ENCODE measurements at regions of chr17 and their contacts with region 1.

Region 1: GRCh38 chr17:44864866-44865660 is 17.4 kb downstream of the HIGD1B start:
- DNase-seq: no peak
- H3K4me3 ChIP-seq: no peak overlapping the region
- H3K27me3 ChIP-seq: no peaks in the 10 kb centered on the region
- CTCF ChIP-seq: peak; percentile 87

Region 2: GRCh38 chr17:44623070-44623725 is 241.9 kb before region 1 on chr17:
- CTCF ChIA-PET with region 1: no interaction called
- POLR2A ChIA-PET with region 1: no interaction called
- DNase-seq: no peak
- H3K4me3 ChIP-seq: no peak overlapping the region
- H3K27me3 ChIP-seq: no peaks in the 10 kb centered on the region
- CTCF ChIP-seq: no peak

Region 3: GRCh38 chr17:44844390-44844830 is 20.7 kb before region 1 on chr17:
- CTCF ChIA-PET with region 1: interaction called, 17 read pairs
- POLR2A ChIA-PET with region 1: no interaction called
- DNase-seq: no peak
- H3K4me3 ChIP-seq: no peak overlapping the region
- H3K27me3 ChIP-seq: no peaks in the 10 kb centered on the region
- CTCF ChIP-seq: peak; percentile 18; the same call in 1 of the 2 replicates

Region 4: GRCh38 chr17:44854192-44854591 is 10.9 kb before region 1 on chr17:
- CTCF ChIA-PET with region 1: interaction called, 18 read pairs
- POLR2A ChIA-PET with region 1: no interaction called
- DNase-seq: no peak
- H3K4me3 ChIP-seq: no peak overlapping the region
- H3K27me3 ChIP-seq: no peaks in the 10 kb centered on the region
- CTCF ChIP-seq: no peak

Region 5: DNA sequence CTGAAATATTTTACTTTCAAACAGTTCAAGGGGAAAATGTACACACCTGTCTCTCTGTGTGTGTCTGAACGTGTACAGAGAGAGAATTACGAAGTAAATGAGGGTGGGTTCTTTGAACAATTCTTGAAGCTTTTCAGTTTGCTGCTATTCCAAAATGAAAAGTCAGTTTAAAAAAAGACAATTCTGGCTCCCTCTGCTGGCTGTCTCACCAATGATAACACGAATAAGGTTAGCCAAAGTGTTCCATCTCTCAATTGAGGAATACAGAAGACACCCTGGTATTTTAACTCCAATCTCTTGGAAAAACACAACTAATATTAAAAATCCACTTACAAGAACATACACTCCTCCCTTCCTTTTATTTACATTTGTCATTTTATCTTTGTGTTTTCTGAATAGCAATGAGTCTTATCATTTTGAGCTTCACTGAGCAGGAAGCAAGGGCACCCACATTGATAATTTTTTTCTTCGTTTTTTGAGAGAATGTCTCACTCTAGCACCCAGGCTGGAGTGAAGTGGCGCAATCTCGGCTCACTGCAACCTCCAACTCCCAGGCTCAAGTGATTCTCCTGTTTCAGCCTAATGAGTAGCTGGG is 13.7 kb after region 1 on chr17:
- CTCF ChIA-PET with region 1: interaction called, 101 read pairs
- POLR2A ChIA-PET with region 1: no interaction called
- DNase-seq: no peak
- H3K4me3 ChIP-seq: no peak overlapping the region
- H3K27me3 ChIP-seq: no peaks in the 10 kb centered on the region
- CTCF ChIP-seq: peak; percentile 67

Region 6: DNA sequence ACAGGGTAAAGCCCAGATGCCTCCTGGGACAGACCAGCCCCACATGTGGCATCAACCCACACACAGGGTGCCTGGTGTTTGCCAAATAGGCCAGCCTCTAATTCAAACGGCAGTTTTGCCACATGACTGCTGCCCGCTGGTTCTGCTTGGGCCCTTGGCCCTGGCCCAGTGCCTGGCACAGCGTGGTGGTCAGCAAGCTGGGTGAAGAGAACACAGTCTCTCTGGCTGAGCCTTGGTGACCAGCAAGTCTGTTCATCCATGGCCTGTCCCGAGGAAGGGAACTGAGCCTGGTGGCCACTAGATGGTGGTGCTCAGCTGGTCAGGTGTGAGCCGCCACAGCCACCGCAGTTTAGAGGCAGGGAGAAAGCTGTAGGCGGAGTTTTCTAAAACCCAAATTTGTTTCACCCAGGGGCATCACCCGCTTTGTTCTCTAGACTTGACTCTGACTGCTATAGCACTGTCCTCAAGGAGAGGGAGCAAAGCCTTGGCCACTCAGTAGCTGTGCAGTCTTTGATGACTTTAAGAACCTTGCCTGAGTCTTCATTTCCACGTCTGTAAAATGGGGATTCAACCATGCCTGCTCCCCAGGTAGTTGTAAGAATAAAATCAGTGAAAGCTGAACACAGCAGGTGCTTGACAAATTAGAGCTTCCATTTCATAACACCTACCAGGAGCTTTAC is 55.0 kb after region 1 on chr17:
- CTCF ChIA-PET with region 1: no interaction called
- POLR2A ChIA-PET with region 1: no interaction called
- DNase-seq: no peak
- H3K4me3 ChIP-seq: no peak overlapping the region
- H3K27me3 ChIP-seq: no peaks in the 10 kb centered on the region
- CTCF ChIP-seq: peak; percentile 85

Region 7: GRCh38 chr17:45261577-45262515 is 396.8 kb after region 1 on chr17 and contains the start of gene SPATA32:
- CTCF ChIA-PET with region 1: no interaction called
- POLR2A ChIA-PET with region 1: no interaction called
- DNase-seq: no peak
- H3K4me3 ChIP-seq: peak within 1 kb of the TSS; percentile 26
- H3K27me3 ChIP-seq: no peaks in the 10 kb centered on the region
- CTCF ChIP-seq: no peak
- polyA plus RNA-seq, gene SPATA32: not detected in 2 replicates

Measured in BJ (cell line).